Prostate gland (tissue), 2 donors: ENCODE measurements at regions of chr13 and their contacts with region 1.

Region 1: DNA sequence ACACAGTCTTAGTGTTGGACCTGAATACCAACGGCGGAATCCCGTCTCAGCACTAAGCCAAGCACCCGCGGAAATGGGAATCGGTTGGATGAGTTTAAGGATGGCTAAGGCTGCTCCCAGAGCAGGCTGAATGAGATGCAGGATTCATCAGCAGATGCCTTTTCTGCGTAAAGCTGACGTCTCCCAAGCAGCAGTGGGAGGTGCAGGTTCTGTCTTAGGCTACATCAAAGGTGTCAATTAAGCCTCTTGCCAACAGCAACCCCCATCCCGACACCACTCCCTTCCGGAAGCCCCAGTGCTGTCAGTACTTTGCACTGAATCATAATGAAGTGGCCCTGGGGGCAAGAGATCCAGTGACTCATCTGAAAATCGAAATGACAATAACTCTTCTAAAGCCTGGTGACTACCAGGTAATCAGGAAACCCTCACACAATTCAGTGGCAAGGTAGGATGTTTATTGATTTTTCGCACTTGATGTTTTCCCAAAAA is 275.6 kb downstream of the DCLK1 start:
- DNase-seq: no peak
- H3K4me3 ChIP-seq: no peak overlapping the region
- H3K27ac ChIP-seq: no peak overlapping the region
- H3K4me1 ChIP-seq: no peaks in the 10 kb centered on the region
- H3K27me3 ChIP-seq: no peaks in the 10 kb centered on the region
- CTCF ChIP-seq: no peak
- POLR2A ChIP-seq: no peak

Region 2: DNA sequence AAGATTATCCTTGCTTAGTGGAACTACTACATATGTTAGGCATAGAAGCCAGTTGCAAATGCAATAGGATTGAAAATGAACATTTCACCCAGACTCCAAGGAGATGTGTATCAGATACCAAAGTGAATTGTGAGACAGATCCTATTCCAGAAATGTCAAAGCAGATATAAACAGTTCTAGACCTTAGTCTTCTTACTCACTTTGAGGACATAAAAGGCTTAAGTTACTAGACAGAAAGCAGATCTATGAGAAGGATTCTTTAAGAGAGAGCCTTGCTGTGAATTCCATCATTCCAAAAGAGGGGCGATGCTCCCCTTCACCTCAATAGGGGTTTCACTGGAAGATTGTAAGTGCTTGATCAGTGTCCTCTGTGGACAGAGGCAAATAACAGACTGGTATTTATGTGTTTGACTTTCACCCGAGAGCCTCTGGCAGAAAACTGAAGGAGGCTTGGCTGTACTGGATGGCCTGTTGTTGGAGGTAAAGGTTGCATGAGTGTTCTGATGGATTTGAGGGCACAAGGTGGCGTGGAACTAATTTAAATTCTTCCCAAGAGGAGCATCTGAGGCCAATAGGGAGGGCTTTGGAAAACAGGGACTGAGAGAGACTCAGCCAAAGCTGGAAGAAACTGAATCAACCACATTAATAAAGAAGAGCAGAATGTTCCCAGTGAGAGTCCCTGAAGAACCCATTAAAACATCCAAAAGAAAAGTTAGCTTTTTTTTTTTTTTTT is 80.8 kb after region 1 on chr13:
- intact Hi-C with region 1: loop called (anchors 5 kb)
- DNase-seq: no peak
- H3K4me3 ChIP-seq: no peak overlapping the region
- H3K27ac ChIP-seq: peak overlapping the region; percentile 46 to 57
- H3K4me1 ChIP-seq: no peaks in the 10 kb centered on the region
- H3K27me3 ChIP-seq: no peaks in the 10 kb centered on the region
- CTCF ChIP-seq: no peak
- POLR2A ChIP-seq: no peak